Psoas muscle (tissue), 8 donors: ENCODE measurements at regions of chr12 and their contacts with region 1.

Region 1: GRCh38 chr12:104877123-104877705 is 80.9 kb downstream of the SLC41A2 start:
- DNase-seq: peak in 1 of 2 donors; percentile 24
- ATAC-seq: peak in 2 of 4 donors; percentile 69
- H3K4me3 ChIP-seq: no peak overlapping the region
- H3K27ac ChIP-seq: no peak overlapping the region
- H3K4me1 ChIP-seq: no peaks in the 10 kb centered on the region
- H3K27me3 ChIP-seq: no peaks in the 10 kb centered on the region
- CTCF ChIP-seq: peak; percentile 63

Region 2: GRCh38 chr12:105053116-105053572 is 175.9 kb after region 1 on chr12:
- intact Hi-C with region 1: loop called in 1 of 2 experiments (anchors 10 kb)
- DNase-seq: peak; percentile 63 to 73
- ATAC-seq: peak in 3 of 4 donors; percentile 48 to 84 (median 72)
- H3K4me3 ChIP-seq: no peak overlapping the region
- H3K27ac ChIP-seq: no peak overlapping the region
- H3K4me1 ChIP-seq: no peaks in the 10 kb centered on the region
- H3K27me3 ChIP-seq: no peaks in the 10 kb centered on the region
- CTCF ChIP-seq: peak; percentile 95